Left ventricle myocardium inferior (tissue), 1 donor: ENCODE measurements at regions of chr7 and their contacts with region 1.

Region 1: DNA sequence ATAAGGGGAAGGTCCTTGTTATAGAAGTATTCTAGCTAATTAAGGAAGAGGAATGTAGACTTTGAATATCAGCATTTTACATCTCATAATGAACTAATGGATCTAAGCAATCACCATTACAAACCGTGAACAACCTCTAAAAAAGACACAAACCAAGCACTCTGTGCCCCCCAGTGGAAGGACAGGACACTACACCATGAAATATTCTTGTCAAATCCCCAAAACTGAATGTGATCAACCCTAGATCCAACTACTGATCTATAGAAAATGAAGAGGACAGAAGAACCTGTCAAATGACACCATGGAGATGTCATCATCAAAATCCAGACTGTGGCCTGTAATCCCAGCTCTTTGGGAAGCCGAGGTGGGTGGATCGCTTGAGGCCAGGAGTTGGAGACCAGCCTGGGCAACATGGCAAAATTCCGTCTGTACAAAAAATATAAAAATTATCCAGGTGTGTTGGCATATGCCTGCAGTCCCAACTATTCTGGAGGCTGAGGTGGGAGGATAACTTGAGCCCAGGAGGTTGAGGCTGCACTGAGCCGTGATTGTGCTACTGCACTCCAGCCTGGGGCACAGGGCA is 111.3 kb upstream of the CARD11 start:
- DNase-seq: no peak
- H3K4me3 ChIP-seq: no peak overlapping the region
- H3K27ac ChIP-seq: no peak overlapping the region
- H3K4me1 ChIP-seq: no peaks in the 10 kb centered on the region
- H3K27me3 ChIP-seq: peaks cover 45% of the 10 kb centered on the region
- CTCF ChIP-seq: peak; percentile 70

Region 2: DNA sequence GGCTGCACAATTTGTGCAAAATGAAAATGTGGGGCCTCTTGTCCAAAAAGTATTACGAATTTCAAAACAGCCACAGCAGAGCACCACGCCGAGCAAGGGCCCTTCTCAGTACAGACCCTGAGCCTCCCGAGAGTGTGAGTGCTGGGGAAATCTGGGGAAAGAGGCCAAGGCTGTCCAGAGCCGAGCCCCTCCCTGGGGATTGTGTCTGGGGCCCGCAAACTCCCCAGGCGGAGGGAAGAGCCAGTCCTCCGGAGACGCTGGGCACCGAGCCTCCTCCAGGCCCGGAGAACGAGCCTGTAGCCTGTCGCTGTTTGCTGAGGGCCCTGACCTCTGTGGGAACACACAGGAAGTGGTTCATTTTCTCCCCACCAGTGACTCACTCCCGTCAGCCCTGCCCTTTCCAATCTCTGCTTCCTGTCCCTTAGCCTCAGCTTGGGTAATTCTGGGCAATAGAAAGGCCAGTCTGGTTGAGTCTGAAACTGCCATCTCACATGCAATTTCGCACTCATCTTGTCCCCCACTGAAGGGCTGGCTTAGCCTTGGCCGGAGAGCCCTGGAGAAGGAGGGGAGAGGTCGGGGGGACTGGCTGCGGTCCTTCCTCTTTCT is 291.4 kb before region 1 on chr7:
- intact Hi-C with region 1: loop called (anchors 10 kb)
- DNase-seq: peak; percentile 81
- H3K4me3 ChIP-seq: peak overlapping the region; percentile 44
- H3K27ac ChIP-seq: peak overlapping the region; percentile 91
- H3K4me1 ChIP-seq: peaks cover 22% of the 10 kb centered on the region
- H3K27me3 ChIP-seq: no peaks in the 10 kb centered on the region
- CTCF ChIP-seq: no peak

Region 3: DNA sequence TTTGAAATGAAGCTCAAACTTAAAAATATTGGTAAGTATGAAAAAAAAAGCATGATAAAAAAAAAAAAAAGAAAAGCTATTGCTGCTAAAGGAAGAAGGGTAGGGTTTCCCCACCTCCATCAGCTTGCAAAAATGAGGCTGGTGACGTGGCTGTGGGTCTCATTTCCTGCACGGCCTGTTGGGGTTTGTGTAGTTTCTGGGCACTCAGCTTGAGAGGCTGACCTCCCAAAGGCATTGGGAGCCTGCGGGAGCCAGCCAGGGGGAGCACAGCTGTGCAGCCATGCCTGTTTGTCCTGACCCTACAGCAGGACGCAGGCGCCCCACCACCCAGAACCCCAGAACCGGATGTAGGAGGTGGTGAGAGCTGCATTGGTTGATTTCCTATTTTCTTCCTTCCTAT is 62.5 kb before region 1 on chr7:
- intact Hi-C with region 1: no loop called
- DNase-seq: peak; percentile 36
- H3K4me3 ChIP-seq: no peak overlapping the region
- H3K27ac ChIP-seq: no peak overlapping the region
- H3K4me1 ChIP-seq: no peaks in the 10 kb centered on the region
- H3K27me3 ChIP-seq: peaks cover 41% of the 10 kb centered on the region
- CTCF ChIP-seq: no peak